Activated CD4-positive, alpha-beta memory T cell treated with anti-CD3 and anti-CD28 coated beads, Interleukin-2, amount 10 ng/mL, durations not matched to agents 7 days and 5 days (primary cell): ENCODE measurements at regions of chr5 and their contacts with region 1.

Region 1: GRCh38 chr5:141878711-141879425 is 658 bp upstream of the PCDH1 start:
- DNase-seq: peak; percentile 89
- H3K4me3 Mint-ChIP-seq: peak overlapping the region; percentile 70
- H3K27ac Mint-ChIP-seq: no peak overlapping the region
- H3K4me1 Mint-ChIP-seq: peaks cover 29% of the 10 kb centered on the region
- H3K27me3 Mint-ChIP-seq: peaks cover 84% of the 10 kb centered on the region

Region 2: DNA sequence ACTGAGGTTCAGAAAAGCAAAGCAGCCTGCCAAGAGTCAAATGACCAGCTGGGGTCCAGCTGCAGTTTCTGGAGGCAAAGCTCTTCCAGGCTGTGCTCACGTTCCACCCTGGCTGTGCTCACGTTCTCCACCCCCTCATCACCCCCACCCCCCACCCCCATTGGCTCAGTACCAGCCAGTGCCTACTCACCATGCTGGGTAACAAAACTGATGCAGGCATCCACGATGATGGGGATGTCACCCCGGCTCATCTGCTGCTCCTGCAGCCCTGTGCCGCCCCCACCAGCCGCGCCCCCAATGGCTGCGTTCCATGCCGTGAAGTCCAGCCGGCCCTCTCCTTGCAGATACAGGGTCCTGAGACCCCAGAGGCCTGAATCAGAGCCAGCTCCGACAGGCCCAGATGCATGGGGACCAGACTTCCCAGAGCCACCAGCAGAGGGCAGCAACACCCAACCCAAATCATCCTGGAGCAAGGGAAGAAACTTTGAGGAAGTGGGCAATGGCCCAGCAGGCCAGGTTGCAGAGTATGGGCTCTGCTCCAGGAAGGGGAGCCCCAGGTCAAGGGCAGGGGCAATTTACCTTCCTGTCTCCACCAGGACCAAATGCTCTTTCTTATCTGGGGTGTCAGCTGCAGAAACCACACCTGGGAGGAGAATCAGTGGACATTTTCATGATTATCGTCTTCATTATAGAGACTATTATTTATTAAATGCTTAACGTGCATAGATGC is 214.0 kb before region 1 on chr5:
- CTCF ChIA-PET with region 1: interaction called, 28 read pairs
- POLR2A ChIA-PET with region 1: no interaction called
- DNase-seq: peak; percentile 80
- H3K4me3 Mint-ChIP-seq: no peak overlapping the region
- H3K27ac Mint-ChIP-seq: no peak overlapping the region
- H3K4me1 Mint-ChIP-seq: peaks cover 5% of the 10 kb centered on the region
- H3K27me3 Mint-ChIP-seq: no peaks in the 10 kb centered on the region

Region 3: GRCh38 chr5:141849375-141850243 is 29.3 kb before region 1 on chr5:
- CTCF ChIA-PET with region 1: interaction called, 4 read pairs
- POLR2A ChIA-PET with region 1: interaction called, 14 read pairs
- DNase-seq: peak; percentile 81
- H3K4me3 Mint-ChIP-seq: peak overlapping the region; percentile 80
- H3K27ac Mint-ChIP-seq: peak overlapping the region; percentile 84
- H3K4me1 Mint-ChIP-seq: peaks cover 21% of the 10 kb centered on the region
- H3K27me3 Mint-ChIP-seq: peaks cover 10% of the 10 kb centered on the region

Region 4: GRCh38 chr5:141914199-141914743 is 35.4 kb after region 1 on chr5:
- CTCF ChIA-PET with region 1: interaction called, 19 read pairs
- POLR2A ChIA-PET with region 1: no interaction called
- DNase-seq: no peak
- H3K4me3 Mint-ChIP-seq: no peak overlapping the region
- H3K27ac Mint-ChIP-seq: no peak overlapping the region
- H3K4me1 Mint-ChIP-seq: peaks cover 10% of the 10 kb centered on the region
- H3K27me3 Mint-ChIP-seq: peaks cover 42% of the 10 kb centered on the region

Region 5: GRCh38 chr5:142003961-142004360 is 125.1 kb after region 1 on chr5:
- CTCF ChIA-PET with region 1: no interaction called
- POLR2A ChIA-PET with region 1: no interaction called
- DNase-seq: no peak
- H3K4me3 Mint-ChIP-seq: no peak overlapping the region
- H3K27ac Mint-ChIP-seq: no peak overlapping the region
- H3K4me1 Mint-ChIP-seq: peaks cover 33% of the 10 kb centered on the region
- H3K27me3 Mint-ChIP-seq: no peaks in the 10 kb centered on the region

Region 6: GRCh38 chr5:142145106-142145900 is 266.4 kb after region 1 on chr5:
- CTCF ChIA-PET with region 1: interaction called, 11 read pairs
- POLR2A ChIA-PET with region 1: no interaction called
- DNase-seq: peak; percentile 69
- H3K4me3 Mint-ChIP-seq: no peak overlapping the region
- H3K27ac Mint-ChIP-seq: no peak overlapping the region
- H3K4me1 Mint-ChIP-seq: no peaks in the 10 kb centered on the region
- H3K27me3 Mint-ChIP-seq: no peaks in the 10 kb centered on the region